Activated CD4-positive, alpha-beta memory T cell treated with anti-CD3 and anti-CD28 coated beads, Interleukin-2, amount 10 ng/mL, durations not matched to agents 7 days and 5 days (primary cell): ENCODE measurements at regions of chr1 and their contacts with region 1.

Region 1: DNA sequence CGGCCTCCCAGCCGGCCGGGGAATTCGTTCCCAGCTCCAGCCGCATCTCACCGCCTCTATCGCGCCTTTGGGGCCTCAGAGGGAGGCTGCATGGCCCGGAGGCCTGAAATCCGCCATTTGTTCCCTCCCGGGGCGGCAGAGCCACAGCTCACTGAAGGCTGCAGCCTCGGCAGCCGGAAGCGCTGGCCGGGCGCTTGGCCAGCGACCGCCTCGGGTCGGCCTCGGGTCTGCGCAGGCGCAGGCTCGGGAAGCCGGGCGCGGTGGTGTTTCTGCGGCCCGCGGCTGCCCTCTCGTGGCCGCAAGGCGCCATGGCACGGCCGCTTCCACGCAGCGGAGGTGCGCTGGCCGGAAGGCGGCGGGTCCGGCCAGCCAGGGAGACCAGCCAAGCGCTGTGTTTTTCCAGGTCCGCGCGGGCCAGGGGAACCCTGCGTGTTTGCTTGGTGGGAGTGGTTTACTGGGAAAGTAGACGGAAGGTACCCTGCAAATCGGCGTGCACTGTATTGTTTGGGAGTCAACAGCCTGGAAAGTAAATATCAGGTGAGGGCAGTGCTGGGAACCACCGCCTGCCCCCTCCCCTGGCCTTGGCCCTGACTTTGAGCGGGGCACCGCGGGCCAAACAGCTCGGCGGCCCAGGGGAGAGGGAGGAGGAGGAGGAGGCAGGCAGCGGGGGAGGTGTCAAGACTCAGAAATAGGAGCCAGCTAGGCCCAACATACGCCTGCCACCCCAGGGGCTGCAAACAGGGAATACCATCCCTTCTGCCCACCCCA is 52.7 kb upstream of the CD34 start:
- DNase-seq: peak; percentile 87
- H3K4me3 Mint-ChIP-seq: peak overlapping the region; percentile 74
- H3K27ac Mint-ChIP-seq: peak overlapping the region; percentile 36
- H3K4me1 Mint-ChIP-seq: peaks cover 9% of the 10 kb centered on the region
- H3K27me3 Mint-ChIP-seq: peaks cover 42% of the 10 kb centered on the region

Region 2: GRCh38 chr1:207762622-207763021 is 201.0 kb before region 1 on chr1:
- CTCF ChIA-PET with region 1: no interaction called
- POLR2A ChIA-PET with region 1: no interaction called
- DNase-seq: no peak
- H3K4me3 Mint-ChIP-seq: no peak overlapping the region
- H3K27ac Mint-ChIP-seq: no peak overlapping the region
- H3K4me1 Mint-ChIP-seq: peaks cover 5% of the 10 kb centered on the region
- H3K27me3 Mint-ChIP-seq: no peaks in the 10 kb centered on the region

Region 3: GRCh38 chr1:207811920-207812720 is 151.5 kb before region 1 on chr1:
- CTCF ChIA-PET with region 1: interaction called, 10 read pairs
- POLR2A ChIA-PET with region 1: interaction called, 3 read pairs
- DNase-seq: peak; percentile 18
- H3K4me3 Mint-ChIP-seq: no peak overlapping the region
- H3K27ac Mint-ChIP-seq: no peak overlapping the region
- H3K4me1 Mint-ChIP-seq: peaks cover 53% of the 10 kb centered on the region
- H3K27me3 Mint-ChIP-seq: no peaks in the 10 kb centered on the region

Region 4: DNA sequence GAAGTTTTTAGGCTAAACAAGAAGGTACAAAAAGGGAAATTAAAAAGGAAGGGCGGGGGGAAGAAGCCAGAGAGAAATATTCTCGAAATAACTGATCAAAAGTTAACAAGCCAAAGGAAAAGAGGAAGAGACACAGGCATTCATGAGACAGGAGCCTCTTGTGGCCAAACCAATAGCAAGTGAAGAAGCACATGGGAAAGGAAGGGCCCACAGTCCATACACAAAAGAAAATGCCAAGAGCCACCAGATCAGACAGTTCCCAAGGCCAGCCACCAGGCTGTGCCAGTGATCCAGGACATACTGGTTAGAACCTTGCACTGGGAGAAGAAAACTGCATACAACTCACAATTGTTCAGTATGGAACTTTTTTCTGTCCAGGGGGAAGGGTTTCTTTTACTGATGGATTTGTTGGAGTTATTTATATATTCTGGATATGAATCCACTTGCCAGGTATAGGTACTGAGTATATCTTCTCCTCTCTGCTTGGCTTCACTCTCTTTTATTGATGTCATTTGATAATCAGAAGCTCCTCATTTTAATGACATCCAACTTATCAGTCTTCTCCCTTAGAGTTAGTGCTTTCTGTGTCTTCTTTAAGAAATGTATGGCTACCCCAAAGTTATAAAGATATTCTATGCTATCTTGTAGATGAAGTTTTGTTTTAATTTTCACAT is 135.0 kb before region 1 on chr1:
- CTCF ChIA-PET with region 1: interaction called, 66 read pairs
- POLR2A ChIA-PET with region 1: interaction called, 5 read pairs
- DNase-seq: peak; percentile 65
- H3K4me3 Mint-ChIP-seq: no peak overlapping the region
- H3K27ac Mint-ChIP-seq: peak overlapping the region; percentile 16
- H3K4me1 Mint-ChIP-seq: peaks cover 97% of the 10 kb centered on the region
- H3K27me3 Mint-ChIP-seq: no peaks in the 10 kb centered on the region

Region 5: DNA sequence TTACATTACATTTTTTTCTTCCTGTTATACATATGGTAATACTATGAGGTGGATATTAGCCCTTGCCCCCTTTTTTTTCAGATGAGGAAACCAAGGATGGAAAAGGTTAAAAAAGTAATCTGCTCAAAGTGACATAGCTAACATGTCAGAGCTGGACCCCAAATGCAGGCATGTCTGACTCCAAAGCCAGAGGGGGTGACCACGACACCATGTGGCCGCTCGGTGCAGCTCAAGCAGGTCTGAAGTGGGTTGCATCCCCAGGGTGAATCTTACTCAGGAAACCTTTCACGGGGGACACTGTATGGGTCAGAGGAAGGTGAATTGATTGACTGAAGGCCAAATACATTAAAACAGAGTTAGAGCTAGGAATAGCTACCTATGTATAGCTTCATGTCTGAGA is 87.5 kb before region 1 on chr1:
- CTCF ChIA-PET with region 1: interaction called, 243 read pairs
- POLR2A ChIA-PET with region 1: interaction called, 3 read pairs
- DNase-seq: no peak
- H3K4me3 Mint-ChIP-seq: no peak overlapping the region
- H3K27ac Mint-ChIP-seq: no peak overlapping the region
- H3K4me1 Mint-ChIP-seq: peaks cover 59% of the 10 kb centered on the region
- H3K27me3 Mint-ChIP-seq: no peaks in the 10 kb centered on the region

Region 6: GRCh38 chr1:207897188-207897587 is 66.4 kb before region 1 on chr1:
- CTCF ChIA-PET with region 1: interaction called, 27 read pairs
- POLR2A ChIA-PET with region 1: interaction called, 6 read pairs
- DNase-seq: no peak
- H3K4me3 Mint-ChIP-seq: no peak overlapping the region
- H3K27ac Mint-ChIP-seq: no peak overlapping the region
- H3K4me1 Mint-ChIP-seq: peaks cover 21% of the 10 kb centered on the region
- H3K27me3 Mint-ChIP-seq: peaks cover 7% of the 10 kb centered on the region

Region 7: DNA sequence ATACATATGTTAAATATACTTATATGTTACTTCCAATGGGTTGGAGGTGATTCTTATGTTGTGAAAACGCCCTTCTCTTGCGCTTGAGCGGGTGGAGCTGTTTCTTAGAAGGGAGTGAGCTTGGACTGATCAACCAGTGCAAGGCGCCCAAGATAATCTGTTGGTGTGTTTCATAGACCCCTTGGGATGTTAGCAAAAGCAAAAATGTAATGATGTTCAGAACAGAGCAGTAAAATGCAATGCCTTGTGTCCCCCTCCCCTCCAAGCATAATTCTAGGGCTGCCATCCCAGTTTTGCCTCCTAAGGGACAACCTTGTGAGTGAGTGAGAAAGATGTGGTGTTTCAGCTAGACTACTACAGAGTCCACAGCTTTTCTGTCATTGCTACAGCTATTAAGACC is 46.5 kb before region 1 on chr1:
- CTCF ChIA-PET with region 1: interaction called, 10 read pairs
- POLR2A ChIA-PET with region 1: no interaction called
- DNase-seq: no peak
- H3K4me3 Mint-ChIP-seq: no peak overlapping the region
- H3K27ac Mint-ChIP-seq: no peak overlapping the region
- H3K4me1 Mint-ChIP-seq: no peaks in the 10 kb centered on the region
- H3K27me3 Mint-ChIP-seq: peaks cover 58% of the 10 kb centered on the region